Tibial artery (tissue), 4 donors: ENCODE measurements at regions of chr7 and their contacts with region 1.

Region 1: GRCh38 chr7:103349805-103350204 is 2.4 kb downstream of the PSMC2 start:
- DNase-seq: no peak
- H3K4me3 ChIP-seq: no peak overlapping the region
- H3K27ac ChIP-seq: no peak overlapping the region
- H3K4me1 ChIP-seq: peaks cover 0 to 49% (median 39%) of the 10 kb centered on the region in 4 donors
- H3K27me3 ChIP-seq: no peaks in the 10 kb centered on the region
- CTCF ChIP-seq: no peak

Region 2: DNA sequence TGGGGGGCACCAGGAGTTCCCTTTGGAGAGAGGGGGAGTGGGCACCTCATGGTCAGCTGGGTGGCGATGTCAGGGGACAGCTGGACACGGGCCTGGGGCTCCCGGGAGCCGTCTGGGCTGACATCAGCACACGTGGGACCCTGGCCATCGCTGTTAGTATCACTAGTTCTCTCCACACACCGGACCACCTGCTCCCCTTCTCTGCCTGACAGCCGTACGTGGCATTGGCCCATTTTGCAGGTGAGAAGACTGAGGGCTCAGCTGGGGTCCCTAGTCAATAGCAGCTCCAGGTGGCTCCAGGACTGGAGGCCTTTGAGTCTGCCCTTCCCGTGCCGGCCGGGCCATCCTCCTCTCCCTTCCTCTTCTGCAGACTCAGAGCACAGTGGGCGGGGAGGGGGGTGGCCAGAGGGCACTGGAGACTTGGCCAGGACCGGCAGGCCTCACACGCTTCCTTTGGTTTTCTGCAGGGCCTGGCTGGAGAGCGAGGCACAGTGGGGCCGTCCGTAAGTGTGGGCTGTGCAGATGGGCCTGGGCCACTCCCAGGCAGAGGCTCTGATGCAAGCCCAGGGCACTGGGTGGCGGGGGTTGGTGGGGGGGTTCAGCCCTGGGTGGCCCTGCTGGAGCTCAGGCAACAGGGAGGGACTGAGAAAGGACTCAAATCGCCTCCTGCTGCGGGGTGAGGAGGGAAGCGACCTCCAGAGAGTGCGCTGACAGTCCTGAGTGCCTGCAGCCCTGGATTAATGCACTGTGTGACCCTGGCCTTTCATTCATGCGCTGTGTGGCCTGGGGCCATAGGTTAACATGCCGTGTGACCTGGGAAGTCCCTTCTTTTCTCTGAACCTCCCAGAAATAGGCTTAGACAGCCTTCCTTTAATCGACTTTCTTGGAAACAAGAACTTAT is 1798.9 kb before region 1 on chr7:
- intact Hi-C with region 1: loop called (anchors 5 kb)
- DNase-seq: peak; percentile 15 to 54
- H3K4me3 ChIP-seq: no peak overlapping the region
- H3K27ac ChIP-seq: no peak overlapping the region
- H3K4me1 ChIP-seq: no peaks in the 10 kb centered on the region
- H3K27me3 ChIP-seq: peaks cover 0 to 40% of the 10 kb centered on the region in 2 donors
- CTCF ChIP-seq: no peak

Region 3: DNA sequence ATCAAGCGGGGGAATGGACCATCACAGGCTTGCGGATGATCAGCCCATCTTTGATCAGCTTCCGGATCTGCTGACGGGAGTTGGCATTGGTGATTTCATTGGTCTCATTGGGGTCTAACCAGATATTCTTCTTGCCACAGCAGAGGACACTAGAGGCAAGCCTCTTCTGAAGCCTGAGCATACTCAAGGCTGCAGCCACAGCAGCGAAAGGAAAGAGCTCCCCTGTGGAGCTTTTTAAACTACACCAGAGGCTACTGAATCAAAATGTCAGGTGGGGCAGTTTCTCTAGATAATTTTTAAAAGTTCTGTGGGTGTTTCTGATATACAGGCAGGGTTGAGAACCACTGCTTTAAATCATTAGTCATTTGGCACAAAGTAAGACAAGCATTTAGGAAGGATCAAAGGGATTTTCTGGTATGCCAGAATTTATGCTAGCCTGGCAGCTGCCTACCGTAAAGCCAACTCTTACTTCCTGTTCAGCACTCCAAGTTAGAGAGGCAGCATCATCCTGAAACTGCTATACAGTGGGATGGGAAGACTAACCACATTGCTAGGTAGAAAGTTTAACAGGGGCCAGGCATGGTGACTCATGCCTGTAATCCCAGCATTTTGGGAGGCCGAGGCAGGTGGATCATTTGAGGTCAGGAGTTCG is 207.9 kb before region 1 on chr7:
- intact Hi-C with region 1: no loop called
- DNase-seq: no peak
- H3K4me3 ChIP-seq: no peak overlapping the region
- H3K27ac ChIP-seq: no peak overlapping the region
- H3K4me1 ChIP-seq: peaks cover 0 to 41% (median 7%) of the 10 kb centered on the region in 4 donors
- H3K27me3 ChIP-seq: no peaks in the 10 kb centered on the region
- CTCF ChIP-seq: no peak